ENCODE measurements at regions of chrX and their contacts with region 1.

Region 1: GRCh38 chrX:119871599-119872395 is at the starts of genes NDUFA1 and RNF113A:
- DNase-seq: peak; percentile 77 to 85
- ATAC-seq: peak; percentile 96 to 99 (median 98)
- H3K4me3 ChIP-seq: peak within 1 kb of the TSS; percentile 50 to 81 (median 68)
- H3K27ac ChIP-seq: peak within 1 kb of the TSS; percentile 89 to 97 (median 94)
- H3K4me1 ChIP-seq: peaks cover 0 to 29% (median 8%) of the 10 kb centered on the region in 9 donors
- H3K27me3 ChIP-seq: no peaks in the 10 kb centered on the region
- CTCF ChIP-seq: no peak
- total RNA-seq, gene NDUFA1: 395 to 638 (median 548) TPM
- total RNA-seq, gene RNF113A: 5.6 to 10.9 (median 9.6) TPM

Region 2: GRCh38 chrX:119784747-119785446 is 86.9 kb before region 1 on chrX:
- intact Hi-C with region 1: loop called in 6 of 10 experiments (anchors 5 to 10 kb)
- DNase-seq: peak in 1 of 2 donors; percentile 21
- ATAC-seq: peak in 2 of 8 donors; percentile 33 to 37
- H3K4me3 ChIP-seq: no peak overlapping the region
- H3K27ac ChIP-seq: no peak overlapping the region
- H3K4me1 ChIP-seq: peaks cover 0 to 31% (median 23%) of the 10 kb centered on the region in 9 donors
- H3K27me3 ChIP-seq: no peaks in the 10 kb centered on the region
- CTCF ChIP-seq: peak in 7 of 9 donors; percentile 23 to 59 (median 31)

Region 3: DNA sequence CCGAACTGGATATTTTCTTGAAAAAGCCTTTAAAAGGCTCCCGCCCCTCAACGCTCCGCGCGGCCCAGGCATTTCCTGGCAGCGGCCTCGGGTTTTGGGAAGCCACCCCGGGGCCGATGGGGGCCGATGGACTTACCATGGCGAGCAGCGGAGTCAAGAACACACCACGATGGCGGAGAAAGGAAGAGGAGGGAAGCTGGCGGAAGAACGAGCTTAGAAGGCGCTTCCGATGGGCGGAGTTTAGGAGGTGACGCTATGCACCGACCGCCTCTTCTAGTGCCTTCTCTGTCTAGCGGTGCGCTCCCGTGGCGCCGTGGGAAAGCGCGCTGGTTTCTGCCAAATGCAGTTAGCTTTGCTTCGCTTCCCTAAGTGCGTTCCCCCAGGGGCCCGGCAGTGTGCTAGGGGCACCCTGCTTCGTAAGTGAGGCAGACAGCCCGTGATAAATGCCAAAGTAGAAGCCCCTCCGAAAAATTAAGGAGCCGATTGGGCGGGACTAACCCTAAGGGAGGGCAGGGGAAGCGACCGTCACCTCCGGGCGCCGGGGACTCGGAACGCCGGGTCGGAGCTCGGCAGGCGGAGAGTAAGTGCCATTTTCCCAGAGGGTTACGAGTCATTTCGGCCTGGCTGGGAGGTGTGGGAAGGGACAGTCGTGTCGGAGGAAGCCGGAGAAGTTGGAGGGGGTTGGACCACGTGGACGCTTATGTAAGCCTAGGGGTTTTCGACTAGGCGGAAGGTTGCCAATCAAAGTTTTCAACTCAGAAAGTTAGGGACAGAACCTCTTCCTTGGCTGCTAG is 80.2 kb before region 1 on chrX and contains the start of gene RPL39:
- intact Hi-C with region 1: loop called in 7 of 10 experiments (anchors 1 to 10 kb)
- DNase-seq: peak; percentile 75 to 87
- ATAC-seq: peak; percentile 96 to 99 (median 98)
- H3K4me3 ChIP-seq: peak within 1 kb of the TSS; percentile 50 to 84 (median 76)
- H3K27ac ChIP-seq: peak within 1 kb of the TSS; percentile 91 to 99 (median 95)
- H3K4me1 ChIP-seq: peaks cover 0 to 42% (median 36%) of the 10 kb centered on the region in 9 donors
- H3K27me3 ChIP-seq: no peaks in the 10 kb centered on the region
- CTCF ChIP-seq: no peak
- total RNA-seq, gene RPL39: 1,035 to 1,338 (median 1,072) TPM

Region 4: GRCh38 chrX:119852382-119853353 is 19.1 kb before region 1 on chrX and contains the start of gene UPF3B:
- intact Hi-C with region 1: loop called in 4 of 10 experiments (anchors 1 to 2 kb)
- DNase-seq: peak; percentile 92 to 95
- ATAC-seq: peak; percentile 97 to 99 (median 99)
- H3K4me3 ChIP-seq: peak within 1 kb of the TSS; percentile 47 to 83 (median 70)
- H3K27ac ChIP-seq: peak within 1 kb of the TSS; percentile 44 to 96 (median 89)
- H3K4me1 ChIP-seq: peaks cover 0 to 14% (median 6%) of the 10 kb centered on the region in 9 donors
- H3K27me3 ChIP-seq: peaks cover 0 to 6% (median 0%) of the 10 kb centered on the region in 7 donors
- CTCF ChIP-seq: peak in 1 of 9 donors; percentile 6
- total RNA-seq, gene UPF3B: 2.4 to 3.8 (median 2.9) TPM